ENCODE measurements at regions of chr2 and their contacts with region 1.

Region 1: DNA sequence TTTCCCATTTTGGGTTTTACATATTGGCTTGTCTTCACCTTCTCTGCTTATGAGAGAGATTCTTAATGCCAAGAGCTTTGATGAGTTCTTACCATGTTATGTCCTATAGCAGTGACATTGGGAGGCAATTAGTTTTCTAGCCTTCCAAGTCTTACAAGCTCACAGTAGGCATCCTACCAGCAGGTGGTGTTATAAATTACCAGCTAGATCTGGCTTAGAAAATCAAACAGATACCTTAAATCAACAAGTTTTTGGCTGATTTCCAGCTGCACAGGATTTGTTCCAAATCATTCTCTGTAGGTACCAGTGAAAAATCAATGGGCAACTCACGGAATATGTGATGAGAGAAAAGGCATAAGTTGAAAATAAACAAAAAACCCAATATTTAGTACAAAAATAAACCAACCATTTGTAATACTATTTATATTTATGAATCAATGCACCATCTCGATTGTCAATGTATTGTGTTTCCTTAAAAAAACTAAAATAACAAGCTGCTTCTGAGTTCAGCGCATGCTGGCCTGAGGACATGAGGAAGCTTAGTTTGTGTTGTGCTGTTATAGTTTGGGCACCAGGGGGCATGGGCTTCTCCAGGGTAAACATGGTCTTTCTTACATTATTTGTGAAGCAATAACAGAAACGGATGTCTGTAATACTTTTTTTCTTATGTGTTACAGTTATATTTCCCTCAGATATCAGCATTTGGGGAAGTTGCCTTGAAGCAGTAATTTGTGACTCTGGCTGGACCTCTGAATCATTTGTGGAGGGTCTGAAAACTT is 34.1 kb upstream of the NXPH2 start:
- DNase-seq: no peak
- H3K4me3 ChIP-seq: no peak overlapping the region
- CTCF ChIP-seq: peak; percentile 18

Region 2: GRCh38 chr2:137910641-137911040 is 903.7 kb before region 1 on chr2:
- in situ Hi-C with region 1: loop called (anchors 25 kb)
- DNase-seq: no peak
- H3K4me3 ChIP-seq: no peak overlapping the region
- CTCF ChIP-seq: no peak

Measured in astrocyte of the cerebellum (primary cell).